ENCODE measurements at regions of chr11 and their contacts with region 1.

Region 1: GRCh38 chr11:72141066-72141465 is 5.5 kb downstream of the FOLR3 start:
- DNase-seq: peak; percentile 78
- ATAC-seq: peak; percentile 78
- H3K4me3 Mint-ChIP-seq: peak overlapping the region; percentile 0
- H3K27ac Mint-ChIP-seq: peak overlapping the region; percentile 67
- H3K4me1 Mint-ChIP-seq: peaks cover 45% of the 10 kb centered on the region
- H3K27me3 Mint-ChIP-seq: no peaks in the 10 kb centered on the region

Region 2: GRCh38 chr11:72040726-72041441 is 100.2 kb before region 1 on chr11:
- CTCF ChIA-PET with region 1: interaction called, 10 read pairs
- DNase-seq: peak; percentile 72
- ATAC-seq: peak; percentile 76
- H3K4me3 Mint-ChIP-seq: no peak overlapping the region
- H3K27ac Mint-ChIP-seq: no peak overlapping the region
- H3K4me1 Mint-ChIP-seq: peaks cover 11% of the 10 kb centered on the region
- H3K27me3 Mint-ChIP-seq: no peaks in the 10 kb centered on the region

Region 3: GRCh38 chr11:72112321-72113219 is 28.5 kb before region 1 on chr11 and contains the start of gene ANAPC15:
- CTCF ChIA-PET with region 1: interaction called, 10 read pairs
- DNase-seq: peak; percentile 100
- ATAC-seq: peak; percentile 92
- H3K4me3 Mint-ChIP-seq: peak within 1 kb of the TSS; percentile 93
- H3K27ac Mint-ChIP-seq: peak within 1 kb of the TSS; percentile 98
- H3K4me1 Mint-ChIP-seq: peaks cover 23% of the 10 kb centered on the region
- H3K27me3 Mint-ChIP-seq: no peaks in the 10 kb centered on the region
- total RNA-seq, gene ANAPC15: 53.8 to 63.6 TPM

Region 4: DNA sequence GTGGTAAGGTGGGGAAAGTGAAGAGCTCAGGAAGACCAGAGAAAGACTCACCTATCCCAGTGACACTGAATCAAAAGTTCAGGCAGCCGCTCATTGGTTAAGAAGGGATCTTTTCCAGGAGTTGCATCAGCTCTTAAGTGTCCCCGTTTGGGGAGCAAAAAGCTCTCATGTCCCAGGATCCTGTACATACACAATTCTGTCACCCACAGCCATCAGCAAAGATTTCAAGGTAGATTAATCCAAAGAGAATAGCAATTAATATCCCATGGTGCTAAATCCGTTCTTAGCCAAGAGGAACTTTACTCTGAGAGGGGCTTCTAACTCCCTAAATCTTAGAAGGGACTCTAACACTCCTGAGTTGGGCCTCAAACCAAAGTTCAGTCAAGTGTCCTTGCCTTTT is 13.8 kb after region 1 on chr11:
- CTCF ChIA-PET with region 1: interaction called, 11 read pairs
- DNase-seq: no peak
- ATAC-seq: no peak
- H3K4me3 Mint-ChIP-seq: no peak overlapping the region
- H3K27ac Mint-ChIP-seq: no peak overlapping the region
- H3K4me1 Mint-ChIP-seq: no peaks in the 10 kb centered on the region
- H3K27me3 Mint-ChIP-seq: peaks cover 32% of the 10 kb centered on the region

Region 5: DNA sequence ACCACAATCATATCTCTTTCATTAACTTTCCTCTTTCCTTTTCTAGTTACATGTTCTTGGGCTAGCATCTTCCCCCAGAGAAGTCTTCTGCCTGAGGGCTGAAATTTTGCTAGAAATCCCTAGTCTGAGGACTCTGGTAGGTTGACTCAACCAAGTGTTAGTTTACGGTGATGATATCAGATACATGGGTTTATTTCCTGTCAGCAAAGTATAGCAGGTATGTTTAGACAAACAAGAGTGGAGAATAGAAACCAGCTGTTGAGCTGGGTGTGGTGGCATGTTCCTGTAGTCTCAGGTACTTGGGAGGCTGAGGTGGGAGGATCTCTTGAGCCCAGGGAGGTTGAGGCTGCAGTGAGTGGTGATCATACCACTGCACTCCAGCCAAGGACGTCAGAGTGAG is 62.1 kb after region 1 on chr11:
- CTCF ChIA-PET with region 1: no interaction called
- DNase-seq: no peak
- ATAC-seq: no peak
- H3K4me3 Mint-ChIP-seq: no peak overlapping the region
- H3K27ac Mint-ChIP-seq: no peak overlapping the region
- H3K4me1 Mint-ChIP-seq: peaks cover 5% of the 10 kb centered on the region
- H3K27me3 Mint-ChIP-seq: peaks cover 3% of the 10 kb centered on the region

Measured in activated CD8-positive, alpha-beta memory T cell treated with anti-CD3 and anti-CD28 coated beads, Interleukin-2, amount 10 ng/mL, durations not matched to agents 7 days and 5 days (primary cell).